ENCODE measurements at regions of chr11 and their contacts with region 1.

Region 1: GRCh38 chr11:123110356-123110755 is 48.4 kb upstream of the HSPA8 start:
- DNase-seq: no peak
- CTCF ChIP-seq: no peak

Region 2: GRCh38 chr11:123020968-123021367 is 89.4 kb before region 1 on chr11:
- in situ Hi-C with region 1: no loop called
- DNase-seq: peak; percentile 79
- CTCF ChIP-seq: peak; percentile 78

Region 3: GRCh38 chr11:123246749-123247495 is 136.6 kb after region 1 on chr11:
- in situ Hi-C with region 1: loop called (anchors 10 kb)
- DNase-seq: peak; percentile 78
- CTCF ChIP-seq: peak; percentile 95

Measured in GM13977 (cell line).